SK-N-SH (cell line): ENCODE measurements at regions of chr2 and their contacts with region 1.

Region 1: DNA sequence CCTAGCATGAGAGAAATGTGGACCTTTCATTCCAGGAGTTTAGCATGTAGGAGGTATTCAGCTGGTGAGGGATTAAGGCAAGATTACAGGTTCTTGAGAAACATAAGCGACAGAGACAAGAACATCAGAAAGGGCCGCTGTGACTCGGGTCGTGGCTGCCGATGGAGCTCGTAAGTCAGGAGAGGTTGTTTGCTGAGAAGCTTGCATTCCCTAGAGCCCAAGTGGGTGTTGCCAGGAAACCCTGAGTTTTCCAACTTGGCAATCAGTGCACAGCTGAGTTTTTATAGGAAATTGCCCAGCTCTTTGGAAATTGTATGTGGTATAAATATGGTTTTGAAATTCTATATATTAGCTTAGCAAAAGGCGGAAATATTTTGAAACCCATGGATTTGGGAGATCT is 46.4 kb upstream of the CYP1B1 start:
- DNase-seq: no peak
- H3K4me3 ChIP-seq: no peak overlapping the region
- H3K27ac ChIP-seq: no peak overlapping the region
- H3K4me1 ChIP-seq: peaks cover 0 to 14% of the 10 kb centered on the region in 2 experiments; a peak in 2 of 4 replicates
- H3K27me3 ChIP-seq: no peaks in the 10 kb centered on the region
- CTCF ChIP-seq: no peak
- EP300 ChIP-seq: no peak
- RAD21 ChIP-seq: no peak

Region 2: DNA sequence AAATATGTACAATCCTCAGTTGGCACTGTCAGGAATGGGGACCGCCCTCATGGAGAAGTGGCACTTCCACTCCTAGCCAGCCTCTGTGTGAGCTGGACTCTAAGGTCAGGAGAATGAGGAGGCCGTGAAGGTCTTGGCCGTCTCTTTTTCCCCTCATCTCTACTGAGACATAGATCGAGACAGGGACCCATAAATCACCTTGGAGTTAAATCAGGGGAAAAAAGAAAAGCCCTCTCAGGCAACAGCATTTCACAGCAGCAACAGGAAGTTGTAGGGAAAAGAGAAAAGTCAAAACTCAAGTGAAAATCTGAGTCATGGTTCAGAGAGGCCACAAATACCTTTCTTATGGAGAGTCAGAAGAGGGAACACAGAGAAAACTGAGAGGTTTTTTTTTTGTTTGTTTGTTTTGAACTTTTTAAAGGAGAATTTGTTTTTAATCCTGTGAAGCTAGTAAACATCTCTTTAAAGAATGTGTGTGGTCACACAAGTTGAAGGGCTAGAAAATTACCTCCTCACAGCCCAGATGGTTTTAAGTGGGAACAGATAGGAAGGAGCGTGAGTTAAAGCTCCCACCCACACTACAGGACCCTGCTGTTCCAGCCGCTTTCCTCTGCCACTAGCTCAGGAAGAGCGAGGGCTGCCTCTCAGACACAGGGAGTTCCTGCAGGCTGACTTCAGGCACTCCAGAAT is 15.8 kb before region 1 on chr2:
- CTCF ChIA-PET with region 1: interaction called, 14 read pairs
- POLR2A ChIA-PET with region 1: interaction called, 8 read pairs
- DNase-seq: no peak
- H3K4me3 ChIP-seq: no peak overlapping the region
- H3K27ac ChIP-seq: peak overlapping the region; percentile 51 to 99
- H3K4me1 ChIP-seq: peaks cover 5 to 51% of the 10 kb centered on the region in 2 experiments; a peak in 3 of 4 replicates
- H3K27me3 ChIP-seq: no peaks in the 10 kb centered on the region
- CTCF ChIP-seq: no peak
- EP300 ChIP-seq: no peak
- RAD21 ChIP-seq: no peak